Posterior cingulate gyrus (tissue), 11 donors: ENCODE measurements at regions of chr2 and their contacts with region 1.

Region 1: GRCh38 chr2:101012706-101013181 is 10.7 kb downstream of the RPL31 start:
- DNase-seq: peak in 1 of 10 donors; percentile 29

Region 2: DNA sequence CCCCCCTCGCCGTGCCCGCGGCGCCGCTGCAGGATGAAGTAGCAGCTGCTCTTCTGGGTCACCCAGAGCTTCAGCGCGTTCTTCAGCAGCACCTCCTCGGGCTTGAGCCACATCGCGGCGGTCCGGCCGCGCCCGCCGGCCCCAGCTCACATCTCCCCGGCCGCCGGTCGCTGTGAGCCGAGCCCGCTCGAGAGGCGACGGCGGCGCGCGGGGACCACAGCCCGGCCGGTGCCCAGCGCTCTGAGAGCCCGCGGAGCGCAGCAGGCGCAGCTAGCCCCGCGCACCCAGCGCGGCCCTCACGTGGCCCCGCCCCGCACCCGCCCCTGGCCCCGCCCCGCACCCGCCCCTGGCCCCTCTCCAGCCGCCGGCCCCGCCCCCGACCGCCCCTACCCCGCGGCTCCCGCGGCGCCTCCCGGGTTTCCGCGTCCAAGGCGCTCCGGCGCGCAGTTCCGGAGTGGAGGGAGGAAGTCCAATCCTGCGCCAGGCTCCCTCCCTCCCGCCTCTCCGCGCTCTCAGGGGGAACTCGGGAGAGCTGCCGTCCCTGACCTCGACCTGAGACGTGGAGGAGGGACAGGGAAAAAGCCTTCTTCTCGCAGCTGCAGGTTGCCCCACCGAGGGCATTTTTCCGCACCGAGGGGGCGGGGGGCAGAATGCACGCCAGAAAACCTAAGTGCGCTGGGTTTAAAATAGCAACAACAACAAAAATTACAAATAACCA is 138.6 kb after region 1 on chr2 and contains the start of gene TBC1D8:
- intact Hi-C with region 1: loop called (anchors 2 kb)
- DNase-seq: peak; percentile 63 to 96 (median 80)

Region 3: GRCh38 chr2:101205521-101205998 is 192.8 kb after region 1 on chr2:
- intact Hi-C with region 1: loop called (anchors 2 kb)
- DNase-seq: peak in 9 of 10 donors; percentile 21 to 89 (median 45)